ENCODE measurements at regions of chr6 and their contacts with region 1.

Region 1: GRCh38 chr6:63635588-63636517 is at the start of gene PHF3:
- DNase-seq: peak; percentile 94
- ATAC-seq: peak; percentile 95 to 98
- total RNA-seq, gene PHF3: 30.8 to 35.3 TPM

Region 2: GRCh38 chr6:63598049-63599036 is 37.5 kb before region 1 on chr6:
- intact Hi-C with region 1: loop called in 1 of 2 experiments (anchors 5 kb)
- DNase-seq: peak; percentile 65
- ATAC-seq: peak; percentile 89 to 97